Esophagus muscularis mucosa (tissue), 4 donors: ENCODE measurements at regions of chr2 and their contacts with region 1.

Region 1: GRCh38 chr2:238847841-238848690 is at the start of gene TWIST2:
- DNase-seq: peak; percentile 94
- H3K4me3 ChIP-seq: peak within 1 kb of the TSS; percentile 63 to 89 (median 74)
- H3K27ac ChIP-seq: peak within 1 kb of the TSS; percentile 79 to 93 (median 86)
- H3K4me1 ChIP-seq: peaks cover 14 to 67% (median 51%) of the 10 kb centered on the region in 4 donors
- H3K27me3 ChIP-seq: peaks cover 0 to 47% (median 0%) of the 10 kb centered on the region in 4 donors
- CTCF ChIP-seq: peak; percentile 3 to 25 (median 9)
- EP300 ChIP-seq: no peak
- POLR2A ChIP-seq: peak; percentile 50
- total RNA-seq, gene TWIST2: 37.4 to 51.6 (median 47.4) TPM

Region 2: GRCh38 chr2:238615187-238615586 is 232.9 kb before region 1 on chr2:
- intact Hi-C with region 1: no loop called
- DNase-seq: no peak
- H3K4me3 ChIP-seq: no peak overlapping the region
- H3K27ac ChIP-seq: no peak overlapping the region
- H3K4me1 ChIP-seq: no peaks in the 10 kb centered on the region
- H3K27me3 ChIP-seq: no peaks in the 10 kb centered on the region
- CTCF ChIP-seq: no peak
- EP300 ChIP-seq: no peak
- POLR2A ChIP-seq: no peak

Region 3: GRCh38 chr2:238670111-238670585 is 177.9 kb before region 1 on chr2:
- intact Hi-C with region 1: no loop called
- DNase-seq: no peak
- H3K4me3 ChIP-seq: no peak overlapping the region
- H3K27ac ChIP-seq: no peak overlapping the region
- H3K4me1 ChIP-seq: no peaks in the 10 kb centered on the region
- H3K27me3 ChIP-seq: no peaks in the 10 kb centered on the region
- CTCF ChIP-seq: no peak
- EP300 ChIP-seq: no peak
- POLR2A ChIP-seq: no peak

Region 4: GRCh38 chr2:238864207-238865014 is 16.3 kb after region 1 on chr2:
- intact Hi-C with region 1: no loop called
- DNase-seq: peak; percentile 96
- H3K4me3 ChIP-seq: peak overlapping the region; percentile 32 to 51 (median 39)
- H3K27ac ChIP-seq: peak overlapping the region; percentile 83 to 87 (median 86)
- H3K4me1 ChIP-seq: peaks cover 31 to 81% (median 76%) of the 10 kb centered on the region in 4 donors
- H3K27me3 ChIP-seq: no peaks in the 10 kb centered on the region
- CTCF ChIP-seq: no peak
- EP300 ChIP-seq: no peak
- POLR2A ChIP-seq: no peak

Region 5: DNA sequence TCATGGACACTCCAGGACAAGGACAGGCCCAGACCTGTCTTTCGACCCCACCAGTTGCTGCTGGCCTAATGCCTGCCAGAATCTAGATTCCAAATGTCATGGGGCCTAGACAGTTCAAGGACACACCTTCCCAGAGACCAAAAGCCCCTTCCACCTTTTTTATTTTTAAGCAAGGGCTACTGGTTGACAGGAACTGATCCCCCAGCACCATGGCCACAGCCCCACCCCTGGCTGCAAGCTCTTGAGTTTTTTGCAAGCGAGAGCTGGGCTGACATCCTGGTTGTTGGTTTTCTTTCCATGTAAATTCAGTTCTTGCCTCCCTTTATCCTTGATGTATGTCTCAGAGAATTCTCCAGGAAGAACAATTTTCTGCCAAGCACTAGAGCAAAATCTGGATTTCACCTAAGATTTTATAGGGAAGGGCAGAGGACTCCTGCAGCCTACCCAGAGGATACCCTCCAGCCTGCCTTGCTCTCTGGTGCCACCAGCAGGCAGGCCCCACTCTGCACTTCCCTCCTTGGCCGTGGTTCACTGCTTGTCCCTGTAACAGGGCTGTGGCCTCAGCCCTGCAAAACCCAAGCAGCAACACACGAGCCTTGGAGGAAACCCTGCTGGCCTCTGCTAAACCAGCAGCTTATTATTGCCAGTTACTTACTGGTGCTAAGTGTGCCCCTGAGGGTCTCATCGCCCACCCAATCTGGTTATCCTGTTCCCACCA is 97.5 kb after region 1 on chr2:
- intact Hi-C with region 1: loop called (anchors 10 kb)
- DNase-seq: peak; percentile 88
- H3K4me3 ChIP-seq: no peak overlapping the region
- H3K27ac ChIP-seq: no peak overlapping the region
- H3K4me1 ChIP-seq: peaks cover 0 to 16% (median 7%) of the 10 kb centered on the region in 4 donors
- H3K27me3 ChIP-seq: peaks cover 0 to 6% (median 0%) of the 10 kb centered on the region in 4 donors
- CTCF ChIP-seq: peak; percentile 75 to 93 (median 81)
- EP300 ChIP-seq: no peak
- POLR2A ChIP-seq: no peak